Activated CD4-positive, alpha-beta memory T cell treated with anti-CD3 and anti-CD28 coated beads, Interleukin-2, amount 10 ng/mL, durations not matched to agents 7 days and 5 days (primary cell): ENCODE measurements at regions of chr13 and their contacts with region 1.

Region 1: DNA sequence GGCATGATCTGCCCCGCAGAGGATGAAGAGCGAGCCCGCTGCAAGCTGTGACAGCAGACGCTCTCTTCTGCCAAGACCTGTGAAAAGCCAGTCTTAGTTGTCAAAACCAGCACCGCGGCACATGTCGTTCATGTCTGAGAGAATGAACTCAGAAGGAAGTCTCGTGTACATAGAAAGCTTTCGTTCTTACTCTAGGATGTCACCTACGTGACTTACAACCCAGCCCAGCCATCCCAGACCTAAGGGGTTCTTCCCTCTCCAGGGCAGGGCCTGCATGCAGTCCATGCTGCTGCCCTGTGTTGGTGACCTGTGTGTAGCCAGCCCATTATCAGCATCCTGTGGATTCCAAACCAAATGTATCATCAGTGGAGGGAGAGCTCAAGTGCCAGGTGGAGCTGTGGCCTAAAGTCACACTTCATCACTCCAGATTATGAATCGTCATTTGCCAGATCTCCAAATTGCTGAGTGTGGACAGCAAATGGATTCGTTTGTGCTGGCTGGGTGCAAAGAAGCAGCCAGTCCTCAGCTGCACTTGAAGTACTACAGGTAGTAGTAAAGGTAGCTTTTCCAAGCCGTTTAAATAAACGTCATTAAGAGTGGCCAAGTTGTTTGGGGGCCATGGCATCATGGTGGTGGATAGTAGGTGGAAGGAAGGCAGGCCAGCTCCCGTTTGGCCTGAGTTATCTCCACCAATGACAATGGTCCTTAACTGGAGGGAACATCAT is 73.9 kb upstream of the GPR183 start:
- DNase-seq: peak; percentile 77
- H3K4me3 Mint-ChIP-seq: no peak overlapping the region
- H3K27ac Mint-ChIP-seq: peak overlapping the region; percentile 84
- H3K4me1 Mint-ChIP-seq: peaks cover 86% of the 10 kb centered on the region
- H3K27me3 Mint-ChIP-seq: no peaks in the 10 kb centered on the region

Region 2: GRCh38 chr13:99275093-99275469 is 106.0 kb before region 1 on chr13:
- CTCF ChIA-PET with region 1: interaction called, 121 read pairs
- POLR2A ChIA-PET with region 1: interaction called, 23 read pairs
- DNase-seq: peak; percentile 57
- H3K4me3 Mint-ChIP-seq: no peak overlapping the region
- H3K27ac Mint-ChIP-seq: peak overlapping the region; percentile 65
- H3K4me1 Mint-ChIP-seq: peaks cover 84% of the 10 kb centered on the region
- H3K27me3 Mint-ChIP-seq: no peaks in the 10 kb centered on the region

Region 3: GRCh38 chr13:99307648-99308339 is 73.3 kb before region 1 on chr13:
- CTCF ChIA-PET with region 1: interaction called, 8 read pairs
- POLR2A ChIA-PET with region 1: interaction called, 80 read pairs
- DNase-seq: peak; percentile 78
- H3K4me3 Mint-ChIP-seq: peak overlapping the region; percentile 79
- H3K27ac Mint-ChIP-seq: peak overlapping the region; percentile 83
- H3K4me1 Mint-ChIP-seq: peaks cover 82% of the 10 kb centered on the region
- H3K27me3 Mint-ChIP-seq: no peaks in the 10 kb centered on the region

Region 4: GRCh38 chr13:99322297-99323103 is 58.6 kb before region 1 on chr13:
- CTCF ChIA-PET with region 1: interaction called, 11 read pairs
- POLR2A ChIA-PET with region 1: interaction called, 13 read pairs
- DNase-seq: peak; percentile 44
- H3K4me3 Mint-ChIP-seq: peak overlapping the region; percentile 40
- H3K27ac Mint-ChIP-seq: peak overlapping the region; percentile 97
- H3K4me1 Mint-ChIP-seq: peaks cover 74% of the 10 kb centered on the region
- H3K27me3 Mint-ChIP-seq: no peaks in the 10 kb centered on the region

Region 5: GRCh38 chr13:99356158-99357091 is 24.7 kb before region 1 on chr13:
- CTCF ChIA-PET with region 1: interaction called, 17 read pairs
- POLR2A ChIA-PET with region 1: interaction called, 100 read pairs
- DNase-seq: peak; percentile 67
- H3K4me3 Mint-ChIP-seq: peak overlapping the region; percentile 56
- H3K27ac Mint-ChIP-seq: peak overlapping the region; percentile 96
- H3K4me1 Mint-ChIP-seq: peaks cover 99% of the 10 kb centered on the region
- H3K27me3 Mint-ChIP-seq: no peaks in the 10 kb centered on the region